HCT116 (cell line): ENCODE measurements at regions of chr1 and their contacts with region 1.

Region 1: DNA sequence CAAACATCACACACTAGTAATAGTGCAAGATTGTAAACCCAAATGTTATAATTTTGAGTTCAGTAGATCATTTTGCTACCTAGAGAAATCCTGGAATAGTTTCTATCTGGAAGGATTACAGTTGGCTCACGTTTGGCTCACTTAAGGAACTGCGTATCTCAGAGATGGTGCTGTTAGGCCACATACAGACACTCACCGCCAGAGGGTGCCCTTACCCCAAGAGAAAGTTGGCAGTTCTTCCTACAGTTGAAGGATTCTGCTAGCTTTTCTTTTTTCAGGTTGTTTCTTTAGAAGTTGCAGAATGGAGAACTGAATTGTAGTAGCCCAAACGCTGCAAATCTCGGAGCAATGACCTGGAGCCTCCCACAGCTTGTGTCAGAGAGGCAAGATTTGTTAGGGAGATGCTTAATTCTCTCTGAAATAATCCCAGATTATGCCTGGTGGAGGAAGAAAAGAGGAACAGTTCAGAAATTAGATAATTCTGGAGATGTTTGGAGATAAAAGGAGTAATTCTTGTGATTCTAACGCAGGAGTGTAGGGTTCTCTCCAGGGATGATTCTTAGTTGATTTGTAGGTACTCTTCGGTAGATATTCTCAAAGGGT is 87.9 kb upstream of the PAPPA2 start:
- DNase-seq: peak; percentile 51
- ATAC-seq: peak; percentile 93
- H3K4me3 ChIP-seq: no peak overlapping the region
- H3K27ac ChIP-seq: no peak overlapping the region
- H3K4me1 ChIP-seq: no peaks in the 10 kb centered on the region
- H3K27me3 ChIP-seq: peaks cover 26% of the 10 kb centered on the region; the same call in 1 of the 2 replicates
- CTCF ChIP-seq: peak; percentile 68 to 95 (median 92)
- POLR2A ChIP-seq: no peak
- RAD21 ChIP-seq: peak; percentile 83

Region 2: DNA sequence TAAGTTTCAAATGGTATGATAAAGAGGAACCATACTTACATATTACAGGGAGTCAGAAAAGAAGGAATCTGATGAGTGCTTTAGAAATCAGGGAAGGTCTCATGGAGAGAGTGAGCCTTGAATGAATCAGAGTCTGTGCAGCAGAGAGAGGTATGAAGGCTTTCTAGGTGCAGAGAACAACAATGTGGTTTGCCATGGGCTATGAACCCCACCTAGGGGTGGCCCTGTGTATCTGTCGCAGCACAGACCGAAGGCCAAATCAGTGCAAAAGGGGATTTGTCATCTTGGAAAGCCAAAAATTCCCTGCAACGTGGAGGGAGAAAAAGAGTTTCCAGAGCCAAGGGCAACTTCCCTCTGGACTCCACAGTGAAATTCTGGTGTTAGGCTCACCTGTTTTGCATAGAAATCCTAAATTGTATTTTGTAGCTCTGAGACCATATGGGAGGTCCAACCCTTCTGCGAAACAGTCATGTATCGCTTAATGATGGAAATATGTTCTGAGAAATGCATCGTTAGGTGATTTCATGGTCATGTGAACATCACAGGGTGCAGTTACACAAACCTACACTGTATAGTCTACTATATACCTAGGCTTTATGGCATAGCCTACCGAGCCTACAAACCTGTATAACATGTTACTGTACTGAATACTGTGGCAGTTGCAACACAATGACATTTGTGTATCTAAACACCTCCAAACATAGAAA is 91.6 kb after region 1 on chr1:
- CTCF ChIA-PET with region 1: no interaction called
- POLR2A ChIA-PET with region 1: no interaction called
- RAD21 ChIA-PET with region 1: no interaction called
- intact Hi-C with region 1: loop called (anchors 1 kb)
- DNase-seq: no peak
- ATAC-seq: peak; percentile 86
- H3K4me3 ChIP-seq: no peak overlapping the region
- H3K27ac ChIP-seq: no peak overlapping the region
- H3K4me1 ChIP-seq: no peaks in the 10 kb centered on the region
- H3K27me3 ChIP-seq: peaks cover 39% of the 10 kb centered on the region
- CTCF ChIP-seq: peak; percentile 31 to 68 (median 60); a peak in 4 of 6 replicates
- POLR2A ChIP-seq: no peak
- RAD21 ChIP-seq: peak; percentile 63

Region 3: GRCh38 chr1:176559878-176560277 is 184.8 kb after region 1 on chr1:
- CTCF ChIA-PET with region 1: no interaction called
- POLR2A ChIA-PET with region 1: no interaction called
- RAD21 ChIA-PET with region 1: no interaction called
- intact Hi-C with region 1: loop called (anchors 1 kb)
- DNase-seq: peak; percentile 44
- ATAC-seq: peak; percentile 95
- H3K4me3 ChIP-seq: no peak overlapping the region
- H3K27ac ChIP-seq: no peak overlapping the region
- H3K4me1 ChIP-seq: no peaks in the 10 kb centered on the region
- H3K27me3 ChIP-seq: peaks cover 25% of the 10 kb centered on the region
- CTCF ChIP-seq: peak; percentile 67 to 91 (median 74)
- POLR2A ChIP-seq: no peak
- RAD21 ChIP-seq: peak; percentile 87

Region 4: DNA sequence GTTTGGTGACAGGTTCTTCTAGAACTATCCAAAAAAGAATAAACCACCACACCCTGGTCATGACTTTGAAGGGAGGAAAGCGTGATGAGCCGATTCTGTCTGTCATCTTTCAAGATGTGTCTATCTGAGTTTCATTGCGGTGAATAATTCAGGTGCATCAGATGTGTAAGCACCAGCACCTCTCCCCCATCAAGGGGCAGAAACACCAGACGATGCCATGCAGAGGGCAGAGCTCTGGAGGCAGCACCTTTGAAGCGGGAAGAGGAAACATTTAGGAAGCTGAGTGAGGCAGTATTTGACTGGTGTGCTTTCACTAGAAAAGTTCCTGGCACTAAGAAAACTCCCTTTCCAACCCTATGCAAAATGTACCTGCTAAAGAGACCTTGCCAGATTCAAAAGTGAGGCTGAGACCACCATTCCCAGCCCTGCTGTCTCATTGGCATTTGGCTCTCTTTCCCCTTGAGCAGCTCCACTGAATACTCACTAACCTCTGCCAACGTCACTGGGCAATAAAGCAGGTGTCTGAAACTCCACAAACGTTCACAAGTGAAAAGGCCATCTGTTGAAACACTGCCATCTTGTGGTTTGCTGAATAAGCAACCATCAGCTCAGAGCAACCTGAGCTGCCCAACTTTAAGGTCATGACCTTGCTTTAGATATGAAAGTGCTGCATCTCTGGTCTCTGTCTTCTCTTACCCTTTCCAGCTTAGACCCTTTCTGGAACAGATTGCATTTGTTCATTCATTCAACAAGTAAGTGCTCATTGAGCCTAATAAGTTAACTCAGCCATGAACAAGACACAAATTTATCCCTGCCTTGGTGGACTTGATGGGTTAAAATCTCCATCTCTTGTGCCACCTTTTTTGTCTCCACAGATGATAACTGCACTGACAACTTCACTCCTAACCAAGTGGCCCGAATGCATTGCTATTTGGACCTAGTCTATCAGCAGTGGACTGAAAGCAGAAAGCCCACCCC is 316.5 kb after region 1 on chr1:
- CTCF ChIA-PET with region 1: interaction called, 9 read pairs
- POLR2A ChIA-PET with region 1: no interaction called
- RAD21 ChIA-PET with region 1: interaction called in 1 of 2 experiments, 3 read pairs
- intact Hi-C with region 1: loop called (anchors 1 kb)
- DNase-seq: peak; percentile 47
- ATAC-seq: peak; percentile 82
- H3K4me3 ChIP-seq: no peak overlapping the region
- H3K27ac ChIP-seq: no peak overlapping the region
- H3K4me1 ChIP-seq: peaks cover 0 to 5% of the 10 kb centered on the region in 2 experiments; a peak in 1 of 4 replicates
- H3K27me3 ChIP-seq: peaks cover 30% of the 10 kb centered on the region
- CTCF ChIP-seq: peak; percentile 49 to 69 (median 68); a peak in 5 of 6 replicates
- POLR2A ChIP-seq: no peak
- RAD21 ChIP-seq: peak; percentile 63

Region 5: DNA sequence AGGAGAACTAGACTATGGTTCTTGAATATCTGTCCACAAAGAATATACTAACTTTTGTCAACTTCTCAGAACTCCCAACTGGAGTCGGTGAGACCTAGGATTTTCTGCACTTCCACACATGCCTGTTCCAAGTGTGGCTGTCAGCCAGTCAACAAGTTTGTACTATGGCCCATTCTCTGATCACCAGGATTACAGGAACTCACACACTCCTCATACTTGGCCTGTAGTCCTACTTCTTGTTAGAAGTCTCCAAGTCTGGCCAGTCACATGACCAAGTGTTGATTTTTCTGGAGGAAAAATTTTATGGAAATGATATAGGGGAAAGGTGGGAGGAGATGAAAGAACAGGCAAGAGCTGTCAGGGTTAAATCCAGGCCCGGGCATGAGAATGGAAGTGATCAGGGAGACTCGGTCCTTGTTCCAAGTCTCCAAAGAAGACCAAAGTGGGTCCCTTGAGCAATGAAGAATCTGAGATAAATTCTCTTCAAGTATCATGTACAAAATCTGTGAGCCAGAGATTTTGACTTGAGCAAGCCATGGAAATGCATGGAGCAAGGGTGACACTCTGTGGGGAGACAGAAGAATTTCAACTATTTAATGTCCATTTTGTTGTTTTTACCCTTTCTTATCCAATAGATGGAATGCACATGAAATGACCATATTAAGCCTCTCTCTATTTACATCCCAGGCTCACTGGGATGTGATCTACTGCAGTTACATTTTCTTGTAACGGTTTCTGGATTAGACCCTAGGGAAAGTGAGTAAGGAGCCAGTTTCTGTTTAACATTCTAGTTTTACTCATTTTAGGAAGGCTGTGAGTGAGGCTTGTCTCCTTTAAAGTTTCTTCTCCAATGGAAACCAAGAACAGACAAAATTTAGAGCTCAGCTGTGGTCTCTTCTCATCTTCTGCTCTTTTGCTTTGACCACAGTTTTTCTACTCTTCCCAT is 468.6 kb after region 1 on chr1:
- CTCF ChIA-PET with region 1: no interaction called
- POLR2A ChIA-PET with region 1: no interaction called
- RAD21 ChIA-PET with region 1: no interaction called
- intact Hi-C with region 1: loop called (anchors 2 kb)
- DNase-seq: peak; percentile 7
- ATAC-seq: no peak
- H3K4me3 ChIP-seq: no peak overlapping the region
- H3K27ac ChIP-seq: no peak overlapping the region
- H3K4me1 ChIP-seq: no peaks in the 10 kb centered on the region
- H3K27me3 ChIP-seq: peaks cover 9% of the 10 kb centered on the region
- CTCF ChIP-seq: peak in 2 of 3 experiments; percentile 8 to 47; a peak in 3 of 6 replicates
- POLR2A ChIP-seq: no peak
- RAD21 ChIP-seq: peak; percentile 61

Region 6: DNA sequence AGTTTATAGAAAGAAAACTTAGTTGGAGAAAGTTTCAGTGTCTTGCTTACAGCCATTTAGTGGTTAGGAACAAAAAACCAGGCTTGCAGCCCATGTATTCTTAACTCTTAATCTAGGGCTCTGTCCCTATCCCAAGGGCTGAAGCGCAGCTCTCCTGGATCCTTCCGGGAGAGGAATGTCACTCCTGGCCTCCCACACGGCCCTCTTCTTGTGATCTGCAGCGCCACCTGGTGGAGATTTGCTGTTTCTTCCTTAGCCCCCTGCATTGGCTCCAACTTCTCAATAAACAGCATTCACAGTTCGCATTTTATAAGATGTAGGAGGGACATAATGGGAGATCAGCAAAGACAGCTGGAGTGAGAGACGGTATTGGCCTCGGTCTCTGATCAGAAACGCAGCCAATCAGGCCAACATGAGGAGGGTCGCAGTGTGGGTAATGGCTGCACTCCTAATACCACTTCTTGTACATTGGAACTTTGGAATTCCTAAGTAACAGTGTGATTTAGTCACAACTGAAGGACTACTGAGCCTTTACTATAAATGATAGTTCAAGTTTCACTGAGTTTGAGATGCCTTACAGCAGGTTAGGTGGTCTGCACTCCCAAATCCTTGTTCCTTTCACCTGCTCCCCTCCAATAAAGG is 506.0 kb after region 1 on chr1:
- CTCF ChIA-PET with region 1: interaction called, 3 read pairs
- POLR2A ChIA-PET with region 1: no interaction called
- RAD21 ChIA-PET with region 1: no interaction called
- intact Hi-C with region 1: loop called (anchors 1 kb)
- DNase-seq: peak; percentile 51
- ATAC-seq: peak; percentile 98
- H3K4me3 ChIP-seq: no peak overlapping the region
- H3K27ac ChIP-seq: no peak overlapping the region
- H3K4me1 ChIP-seq: no peaks in the 10 kb centered on the region
- H3K27me3 ChIP-seq: peaks cover 22% of the 10 kb centered on the region
- CTCF ChIP-seq: peak; percentile 70 to 87 (median 77)
- POLR2A ChIP-seq: no peak
- RAD21 ChIP-seq: peak; percentile 85